Prostate gland (tissue), 2 donors: ENCODE measurements at regions of chr4 and their contacts with region 1.

Region 1: DNA sequence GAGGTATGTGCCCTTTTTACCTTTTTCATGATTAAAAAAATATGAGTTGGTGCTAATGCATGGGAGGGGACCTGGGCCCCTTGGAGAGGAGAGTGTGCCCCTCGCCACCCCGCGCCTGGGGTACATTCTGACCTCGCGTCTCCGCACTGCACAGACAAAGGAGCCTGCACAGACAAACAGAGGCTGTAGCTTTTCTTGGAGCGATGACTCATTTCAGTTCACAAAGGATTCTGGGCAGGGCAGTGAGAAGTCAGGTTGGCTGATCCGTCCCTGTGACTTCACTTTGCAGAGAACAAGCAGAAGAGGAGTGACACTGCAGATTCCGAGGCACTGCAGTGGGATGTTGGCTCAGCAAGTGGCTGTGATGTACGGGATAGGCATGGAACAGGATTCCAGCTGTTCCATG is 82.9 kb downstream of the STOX2 start:
- DNase-seq: peak; percentile 81
- H3K4me3 ChIP-seq: peak overlapping the region; percentile 19 to 28
- H3K27ac ChIP-seq: peak overlapping the region; percentile 8 to 32
- H3K4me1 ChIP-seq: no peaks in the 10 kb centered on the region
- H3K27me3 ChIP-seq: no peaks in the 10 kb centered on the region
- CTCF ChIP-seq: no peak
- POLR2A ChIP-seq: peak; percentile 22

Region 2: DNA sequence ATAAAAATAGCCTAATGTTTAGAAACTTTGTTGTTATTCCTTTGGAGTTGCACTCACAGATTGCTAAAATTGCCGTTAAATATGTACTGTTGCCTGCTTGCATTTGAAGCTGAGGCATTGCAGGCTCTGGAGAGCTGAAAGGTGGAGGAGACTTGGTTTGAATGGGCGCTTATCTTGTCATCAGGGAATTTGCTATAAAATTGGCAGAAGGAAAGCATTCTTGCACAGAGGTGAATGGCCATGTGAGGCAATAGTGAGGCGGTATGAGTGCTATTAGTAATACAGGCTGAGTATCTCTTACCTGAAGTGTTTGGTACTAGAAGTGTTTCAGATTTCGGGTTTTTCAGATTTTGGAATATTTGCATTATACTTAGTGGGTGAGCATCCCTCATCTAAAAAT is 287.6 kb before region 1 on chr4:
- intact Hi-C with region 1: no loop called
- DNase-seq: peak; percentile 48
- H3K4me3 ChIP-seq: no peak overlapping the region
- H3K27ac ChIP-seq: no peak overlapping the region
- H3K4me1 ChIP-seq: no peaks in the 10 kb centered on the region
- H3K27me3 ChIP-seq: no peaks in the 10 kb centered on the region
- CTCF ChIP-seq: peak in 1 of 4 experiments; percentile 22
- POLR2A ChIP-seq: no peak

Region 3: GRCh38 chr4:183860731-183861130 is 127.3 kb before region 1 on chr4:
- intact Hi-C with region 1: no loop called
- DNase-seq: peak; percentile 76
- H3K4me3 ChIP-seq: no peak overlapping the region
- H3K27ac ChIP-seq: no peak overlapping the region
- H3K4me1 ChIP-seq: no peaks in the 10 kb centered on the region
- H3K27me3 ChIP-seq: no peaks in the 10 kb centered on the region
- CTCF ChIP-seq: no peak
- POLR2A ChIP-seq: no peak

Region 4: DNA sequence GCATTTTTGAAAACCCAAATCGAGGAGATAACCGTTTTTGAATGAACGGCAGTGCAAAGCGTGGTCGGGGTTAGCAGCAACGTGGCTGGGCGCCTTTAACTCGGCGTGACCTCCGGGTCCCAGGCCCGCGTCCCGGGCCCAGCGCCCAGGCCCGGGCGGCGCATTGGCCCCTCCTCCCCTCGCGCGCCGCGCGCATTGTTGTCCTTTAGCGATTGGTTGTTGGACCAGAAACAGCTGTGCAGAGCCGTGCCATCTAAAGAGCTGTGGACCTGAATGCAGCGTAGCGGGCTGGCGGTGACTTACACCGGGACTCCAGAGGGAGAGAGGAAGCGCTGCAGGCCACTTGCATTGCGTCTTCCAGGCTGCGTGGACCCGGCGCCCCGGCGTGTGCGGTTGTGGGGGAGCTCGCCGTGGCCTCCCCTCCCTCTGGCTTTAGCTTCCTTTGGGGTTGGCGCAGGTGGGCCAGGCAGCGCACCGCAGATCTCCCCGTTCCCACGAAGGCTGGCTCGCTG is 82.9 kb before region 1 on chr4 and contains the start of gene STOX2:
- intact Hi-C with region 1: loop called (anchors 5 kb)
- DNase-seq: peak; percentile 73
- H3K4me3 ChIP-seq: peak within 1 kb of the TSS; percentile 41 to 49
- H3K27ac ChIP-seq: peak within 1 kb of the TSS; percentile 46 to 63
- H3K4me1 ChIP-seq: no peaks in the 10 kb centered on the region
- H3K27me3 ChIP-seq: no peaks in the 10 kb centered on the region
- CTCF ChIP-seq: no peak
- POLR2A ChIP-seq: peak; percentile 42
- total RNA-seq, gene STOX2: 12.9 to 14.9 TPM

Region 5: DNA sequence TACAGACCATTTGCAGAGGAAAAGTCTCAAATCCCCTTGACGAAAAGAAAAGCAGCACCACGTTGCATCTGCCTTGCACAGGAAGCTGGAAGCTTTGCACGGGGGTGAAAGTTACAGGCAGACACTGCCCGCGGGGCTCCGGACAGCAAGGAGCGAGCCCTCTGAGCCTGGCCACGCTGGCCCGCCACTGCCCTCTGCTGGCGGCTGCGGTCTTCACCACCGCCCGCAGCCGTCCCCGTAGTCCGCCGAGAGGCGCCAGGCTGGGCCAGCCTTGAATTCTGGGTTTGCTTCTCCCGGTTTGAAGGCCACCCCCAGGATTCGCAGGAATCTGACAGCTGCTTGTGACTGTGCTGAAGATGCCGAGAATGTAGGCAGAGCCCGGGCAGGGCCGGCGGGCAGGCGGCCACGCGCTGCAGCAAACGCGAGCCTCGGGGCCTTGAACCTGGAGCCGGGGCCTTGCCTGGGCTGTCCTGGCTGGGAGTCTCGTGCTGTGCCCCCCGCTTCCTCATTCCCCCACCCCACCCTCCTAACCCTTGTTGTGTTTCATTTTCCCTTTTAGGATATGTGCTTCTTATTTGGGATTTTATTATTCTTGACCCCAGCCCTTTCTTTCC is 180.5 kb after region 1 on chr4:
- intact Hi-C with region 1: loop called (anchors 10 kb)
- DNase-seq: peak; percentile 41
- H3K4me3 ChIP-seq: no peak overlapping the region
- H3K27ac ChIP-seq: no peak overlapping the region
- H3K4me1 ChIP-seq: no peaks in the 10 kb centered on the region
- H3K27me3 ChIP-seq: no peaks in the 10 kb centered on the region
- CTCF ChIP-seq: peak; percentile 72 to 90 (median 90)
- POLR2A ChIP-seq: no peak